ENCODE measurements at regions of chrX and their contacts with region 1.

Region 1: DNA sequence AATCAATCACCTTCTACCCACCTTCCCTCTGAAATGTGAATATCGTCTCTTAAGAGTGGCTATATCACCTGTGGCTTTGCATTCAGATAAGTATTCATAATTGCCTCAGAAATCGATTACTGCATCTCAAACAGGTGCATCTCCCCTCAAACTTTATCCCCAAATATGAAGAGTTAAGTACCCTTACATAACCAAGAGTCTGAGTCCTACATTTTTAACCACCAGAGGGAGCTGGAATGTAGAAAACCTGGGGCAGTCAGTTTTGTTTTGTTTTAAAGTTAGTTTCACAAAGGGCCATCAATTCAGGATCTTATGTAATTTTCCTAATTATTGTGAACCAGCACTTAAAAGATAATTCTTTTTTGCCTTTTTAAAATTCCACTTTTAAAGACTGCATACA is 5.7 kb downstream of the TCEANC start:
- H3K4me3 Mint-ChIP-seq: no peak overlapping the region
- H3K27ac Mint-ChIP-seq: no peak overlapping the region
- H3K4me1 Mint-ChIP-seq: no peaks in the 10 kb centered on the region
- H3K27me3 Mint-ChIP-seq: no peaks in the 10 kb centered on the region

Region 2: GRCh38 chrX:13699183-13699826 is 40.7 kb after region 1 on chrX:
- intact Hi-C with region 1: loop called (anchors 5 kb)
- H3K4me3 Mint-ChIP-seq: no peak overlapping the region
- H3K27ac Mint-ChIP-seq: no peak overlapping the region
- H3K4me1 Mint-ChIP-seq: peaks cover 46% of the 10 kb centered on the region
- H3K27me3 Mint-ChIP-seq: no peaks in the 10 kb centered on the region

Region 3: GRCh38 chrX:13734278-13735172 is 75.9 kb after region 1 on chrX and contains the starts of genes OFD1 and TRAPPC2:
- intact Hi-C with region 1: loop called (anchors 2 kb)
- H3K4me3 Mint-ChIP-seq: peak within 1 kb of the TSS; percentile 95
- H3K27ac Mint-ChIP-seq: peak within 1 kb of the TSS; percentile 89
- H3K4me1 Mint-ChIP-seq: peaks cover 24% of the 10 kb centered on the region
- H3K27me3 Mint-ChIP-seq: no peaks in the 10 kb centered on the region

Region 4: GRCh38 chrX:13750204-13750603 is 91.6 kb after region 1 on chrX:
- intact Hi-C with region 1: loop called (anchors 5 kb)
- H3K4me3 Mint-ChIP-seq: no peak overlapping the region
- H3K27ac Mint-ChIP-seq: no peak overlapping the region
- H3K4me1 Mint-ChIP-seq: peaks cover 25% of the 10 kb centered on the region
- H3K27me3 Mint-ChIP-seq: no peaks in the 10 kb centered on the region

Region 5: DNA sequence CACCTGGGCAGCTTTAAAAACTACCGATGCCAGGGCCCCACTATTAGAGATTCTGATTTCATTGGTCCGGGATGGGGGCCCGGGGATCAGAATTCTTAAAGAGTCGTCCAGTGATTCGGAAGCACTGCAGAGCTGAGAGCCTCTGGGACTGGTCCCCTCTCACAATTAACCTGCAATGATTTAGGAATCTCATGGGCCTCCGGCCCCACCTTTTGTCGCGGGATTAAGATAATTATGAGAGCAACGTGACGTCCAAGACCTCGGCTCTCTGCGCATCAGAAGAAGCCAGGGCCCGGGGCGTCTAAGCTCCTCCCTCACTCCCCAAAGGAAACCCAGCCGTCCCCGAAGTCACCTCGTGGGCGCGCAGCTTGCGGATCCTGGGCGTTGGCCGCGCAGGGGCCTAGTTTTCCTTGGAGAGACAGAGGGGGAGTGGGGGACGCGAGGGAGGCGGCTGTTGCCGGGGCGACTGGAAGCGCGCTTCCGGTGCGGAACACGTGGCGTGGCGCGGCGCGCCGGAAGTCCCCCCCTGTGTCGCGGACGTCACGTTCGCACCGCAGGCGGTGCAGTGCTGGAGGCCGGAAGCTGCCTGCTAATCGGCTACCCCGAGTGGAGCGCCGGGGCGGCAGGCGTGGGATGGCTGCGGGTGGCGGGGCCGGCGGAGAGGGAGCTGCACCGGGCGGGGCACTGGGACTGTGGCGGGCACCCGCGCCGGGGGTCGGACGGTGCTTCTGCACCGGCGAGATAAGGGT is 371.0 kb after region 1 on chrX and contains the start of gene GEMIN8:
- intact Hi-C with region 1: loop called (anchors 1 kb)
- H3K4me3 Mint-ChIP-seq: peak within 1 kb of the TSS; percentile 92
- H3K27ac Mint-ChIP-seq: peak within 1 kb of the TSS; percentile 98
- H3K4me1 Mint-ChIP-seq: peaks cover 18% of the 10 kb centered on the region
- H3K27me3 Mint-ChIP-seq: no peaks in the 10 kb centered on the region

Measured in dendritic cell treated with granulocyte-macrophage colony-stimulating factor and Interleukin-4, amounts not matched to agents 40 ng/mL and 50 ng/mL, for 4 days (primary cell).